Sciatic nerve (tissue), 2 donors: ENCODE measurements at regions of chr11 and their contacts with region 1.

Region 1: DNA sequence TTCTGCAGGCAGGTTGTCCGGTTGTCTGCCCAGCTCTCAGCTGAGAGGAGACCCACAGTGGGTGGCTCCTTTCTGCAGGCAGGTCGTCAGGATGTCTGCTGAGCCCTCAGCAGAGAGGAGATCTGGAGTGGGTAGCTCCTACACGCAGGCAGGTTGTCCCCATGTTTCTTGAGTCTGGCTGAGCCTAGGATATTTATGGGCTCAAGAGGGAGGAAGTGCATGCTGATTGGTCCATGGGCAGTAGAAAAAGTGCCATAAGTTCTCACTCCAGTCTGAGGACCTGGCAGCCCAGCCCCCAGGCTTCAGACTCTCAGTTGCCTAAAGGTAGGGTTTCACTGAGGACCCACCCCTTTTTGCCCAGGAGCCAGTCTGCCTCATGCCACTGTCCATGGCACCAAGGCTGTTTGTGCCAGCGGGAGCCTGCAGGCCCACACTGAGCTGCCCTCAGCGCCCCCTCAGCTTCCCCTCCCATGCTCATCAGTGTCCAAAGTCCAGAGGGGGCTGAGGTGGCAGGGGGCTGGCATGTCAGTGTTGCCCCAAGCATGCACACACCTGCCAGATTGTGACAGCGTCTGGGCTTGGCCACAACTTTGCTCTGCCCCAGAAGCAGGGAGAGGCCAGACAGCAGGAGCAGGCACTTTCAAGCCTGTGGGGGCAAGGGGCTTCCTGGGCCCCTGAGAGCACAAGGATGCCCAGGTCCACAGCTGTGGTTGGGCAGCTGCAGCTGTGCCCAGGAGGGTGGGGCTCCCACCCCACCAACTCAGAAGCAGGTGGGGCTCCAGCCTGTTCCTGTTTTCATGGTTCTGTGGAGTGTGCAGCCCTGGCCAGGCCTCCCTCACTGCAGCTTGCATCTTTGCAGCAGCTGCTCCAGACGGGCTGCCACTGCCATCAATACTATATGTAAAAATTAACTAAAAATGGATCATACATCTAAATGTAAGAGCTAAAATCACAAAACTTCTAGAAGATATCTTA is 3.8 kb upstream of the RNF141 start:
- DNase-seq: no peak
- ATAC-seq: no peak

Region 2: DNA sequence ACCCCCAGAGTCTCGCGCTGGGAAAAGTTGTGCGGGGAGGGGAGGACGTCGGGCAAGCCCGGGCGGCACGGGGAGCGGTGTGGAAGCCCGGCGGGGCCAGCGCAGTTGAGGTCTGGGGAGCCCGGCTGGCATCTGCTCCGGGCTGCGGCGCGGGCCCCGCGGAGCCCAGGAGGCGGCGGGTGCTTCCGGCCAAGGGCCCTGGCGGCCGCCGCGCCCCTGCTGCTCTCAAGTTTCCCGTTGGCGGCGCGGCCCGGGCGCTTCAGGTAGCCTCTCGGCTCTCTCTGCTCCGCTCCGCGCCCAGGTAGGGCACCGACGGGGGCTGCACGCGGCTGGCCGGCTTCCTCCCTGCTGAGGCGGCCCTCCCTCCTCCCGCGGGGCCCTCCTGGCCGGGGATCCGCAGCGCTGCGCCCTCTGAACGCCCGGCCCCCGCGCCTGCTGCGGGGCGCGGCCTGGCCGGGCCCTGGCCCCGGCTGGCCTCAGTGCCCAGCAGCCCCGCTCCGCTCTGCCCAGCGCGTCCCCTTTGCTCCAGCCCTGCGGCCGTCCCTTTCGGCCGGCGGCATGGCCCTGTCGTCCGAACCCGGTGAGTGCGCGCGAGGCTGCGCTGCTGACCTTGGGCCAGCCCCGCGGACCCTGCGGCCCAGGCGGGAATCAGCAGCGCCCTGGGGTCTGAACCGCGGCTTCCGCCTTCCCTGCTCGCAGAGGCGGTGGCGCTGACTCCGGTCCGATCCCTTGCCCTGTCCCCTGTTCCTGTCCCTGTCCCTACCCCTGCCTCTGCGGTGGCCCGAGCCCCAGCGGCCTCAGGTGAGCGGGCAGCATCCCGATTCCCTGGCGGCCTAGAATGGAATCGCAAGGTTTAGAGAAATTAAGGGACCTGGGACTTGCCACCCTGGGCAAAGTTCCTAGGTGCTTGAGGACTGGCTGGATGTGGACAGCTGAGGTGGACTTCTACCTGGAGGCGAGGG is 94.0 kb before region 1 on chr11:
- intact Hi-C with region 1: no loop called
- DNase-seq: no peak
- ATAC-seq: peak; percentile 25

Region 3: GRCh38 chr11:11089805-11090204 is 545.0 kb after region 1 on chr11:
- intact Hi-C with region 1: no loop called
- DNase-seq: no peak
- ATAC-seq: no peak

Region 4: DNA sequence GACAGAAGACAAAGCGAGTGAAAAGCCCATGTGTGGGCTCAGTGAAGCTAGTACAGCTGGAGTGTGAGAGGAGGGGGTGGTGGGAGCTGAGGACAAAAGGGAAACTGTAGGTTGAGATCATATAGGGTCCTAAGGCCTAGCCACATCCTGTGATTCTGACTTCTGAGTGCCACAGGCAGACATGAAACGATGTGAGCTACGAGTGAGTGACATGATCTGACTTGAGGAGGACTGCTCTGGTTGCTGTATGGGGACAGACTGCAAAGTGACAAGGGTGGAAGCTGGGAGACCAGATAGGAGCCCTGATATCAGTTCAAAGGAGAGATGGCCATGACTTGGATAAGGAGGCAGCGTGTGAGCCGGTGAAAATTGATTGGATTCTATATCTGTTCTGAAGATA is 1651.0 kb after region 1 on chr11:
- intact Hi-C with region 1: loop called (anchors 5 kb)
- DNase-seq: no peak
- ATAC-seq: no peak